ENCODE measurements at regions of chr12 and their contacts with region 1.

Region 1: GRCh38 chr12:111685744-111686517 is at the starts of genes ACAD10 and BRAP:
- DNase-seq: peak; percentile 68
- H3K4me3 ChIP-seq: peak within 1 kb of the TSS; percentile 85
- H3K27me3 ChIP-seq: no peaks in the 10 kb centered on the region
- CTCF ChIP-seq: no peak
- polyA plus RNA-seq, gene ACAD10: 9.9 and 15.4 TPM in 2 replicates
- polyA plus RNA-seq, gene BRAP: 15.8 and 21.8 TPM in 2 replicates

Region 2: GRCh38 chr12:110316861-110317260 is 1369.1 kb before region 1 on chr12:
- CTCF ChIA-PET with region 1: no interaction called
- POLR2A ChIA-PET with region 1: interaction called, 11 read pairs
- DNase-seq: peak; percentile 88
- H3K4me3 ChIP-seq: no peak overlapping the region
- H3K27me3 ChIP-seq: no peaks in the 10 kb centered on the region
- CTCF ChIP-seq: no peak

Region 3: GRCh38 chr12:111546758-111547383 is 139.1 kb before region 1 on chr12:
- CTCF ChIA-PET with region 1: no interaction called
- POLR2A ChIA-PET with region 1: no interaction called
- DNase-seq: no peak
- H3K4me3 ChIP-seq: no peak overlapping the region
- H3K27me3 ChIP-seq: no peaks in the 10 kb centered on the region
- CTCF ChIP-seq: no peak

Region 4: DNA sequence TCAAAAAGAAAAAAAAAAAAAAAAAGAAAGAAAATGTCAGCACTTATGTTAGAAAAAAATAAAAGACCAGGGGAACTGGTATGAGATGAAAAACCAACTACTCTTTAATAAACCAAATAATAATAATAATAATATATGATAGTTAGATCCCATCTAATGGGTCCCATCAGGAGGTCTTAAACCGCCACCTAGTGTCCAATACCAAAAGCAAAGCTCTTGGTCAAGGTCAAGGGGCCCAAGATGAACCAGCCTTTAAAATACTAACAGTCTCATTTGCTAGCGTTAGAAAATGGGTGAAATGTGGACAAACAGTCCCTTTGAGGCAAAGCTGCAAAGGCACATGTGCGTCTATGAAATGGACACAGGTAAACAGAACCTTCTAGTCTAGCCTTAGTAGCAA is 12.4 kb before region 1 on chr12:
- CTCF ChIA-PET with region 1: interaction called, 26 read pairs
- POLR2A ChIA-PET with region 1: no interaction called
- DNase-seq: no peak
- H3K4me3 ChIP-seq: no peak overlapping the region
- H3K27me3 ChIP-seq: no peaks in the 10 kb centered on the region
- CTCF ChIP-seq: peak; percentile 65

Region 5: GRCh38 chr12:111775205-111776193 is 89.6 kb after region 1 on chr12:
- CTCF ChIA-PET with region 1: no interaction called
- POLR2A ChIA-PET with region 1: interaction called, 22 read pairs
- DNase-seq: peak; percentile 33
- H3K4me3 ChIP-seq: no peak overlapping the region
- H3K27me3 ChIP-seq: no peaks in the 10 kb centered on the region
- CTCF ChIP-seq: no peak